H1 (cell line): ENCODE measurements at regions of chr22 and their contacts with region 1.

Region 1: GRCh38 chr22:30423982-30424963 is 1.3 kb upstream of the MTFP1 start:
- DNase-seq: peak; percentile 94 to 99
- H3K4me3 ChIP-seq: peak overlapping the region; percentile 70 to 88 (median 74)
- H3K27ac ChIP-seq: no peak overlapping the region
- H3K4me1 ChIP-seq: peaks cover 3 to 21% (median 13%) of the 10 kb centered on the region in 4 experiments
- H3K27me3 ChIP-seq: no peaks in the 10 kb centered on the region
- CTCF ChIP-seq: peak in 1 of 3 experiments; percentile 20; a peak in 2 of 4 replicates
- EP300 ChIP-seq: peak in 1 of 2 experiments; percentile 76; a peak in 1 of 3 replicates
- POLR2A ChIP-seq: peak; percentile 46 to 81
- RAD21 ChIP-seq: no peak

Region 2: DNA sequence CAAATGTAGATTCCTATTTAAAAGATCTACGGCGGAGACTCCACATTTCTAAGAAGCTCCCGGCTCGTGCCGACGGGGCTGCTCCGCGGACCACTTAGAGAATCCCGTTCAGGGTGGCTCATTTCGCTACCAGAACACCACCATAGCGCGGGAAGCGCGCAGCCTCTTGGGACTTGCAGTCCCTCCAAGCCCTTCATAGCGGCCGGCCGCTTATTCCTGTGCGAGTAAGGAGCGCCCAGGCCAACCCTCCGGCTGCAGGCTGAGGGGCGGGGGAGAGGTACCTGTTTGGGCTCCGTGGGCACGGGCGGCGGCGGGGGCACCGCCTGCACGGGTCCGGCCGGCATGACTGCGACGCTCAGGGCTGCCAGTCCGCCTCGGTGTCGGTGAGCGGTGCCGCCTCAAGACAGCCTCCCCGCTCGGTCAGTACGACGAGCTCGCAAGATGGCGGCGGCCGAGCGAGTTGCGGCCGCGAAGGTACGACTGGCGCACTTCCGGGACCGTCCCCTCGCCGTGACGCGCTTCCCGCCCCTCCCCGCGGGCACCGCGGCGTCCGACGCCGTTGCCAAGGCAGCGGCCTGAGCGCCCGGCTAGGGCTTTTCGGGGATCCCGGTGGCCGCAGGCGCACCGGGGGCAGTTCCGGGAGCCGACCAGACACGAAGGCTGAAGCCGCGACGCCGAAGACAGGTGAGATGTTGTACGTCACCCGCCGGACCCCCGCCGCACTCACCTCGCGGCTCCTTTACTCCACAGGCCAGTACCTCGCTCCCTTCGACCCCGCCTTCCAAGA is 67.6 kb before region 1 on chr22 and contains the starts of genes CCDC157 and SF3A1:
- CTCF ChIA-PET with region 1: interaction called, 4 read pairs
- POLR2A ChIA-PET with region 1: interaction called, 20 read pairs
- DNase-seq: peak; percentile 72 to 91
- H3K4me3 ChIP-seq: peak within 1 kb of the TSS; percentile 78 to 93 (median 91)
- H3K27ac ChIP-seq: peak within 1 kb of the TSS; percentile 93
- H3K4me1 ChIP-seq: peaks cover 2 to 11% (median 4%) of the 10 kb centered on the region in 4 experiments; a peak in 6 of 7 replicates
- H3K27me3 ChIP-seq: no peaks in the 10 kb centered on the region
- CTCF ChIP-seq: no peak
- EP300 ChIP-seq: peak in 1 of 2 experiments; percentile 5; a peak in 1 of 3 replicates
- POLR2A ChIP-seq: peak; percentile 87 to 98
- RAD21 ChIP-seq: no peak
- total RNA-seq, gene CCDC157: 4.1 and 4.8 TPM in 2 replicates
- total RNA-seq, gene SF3A1: 275 and 285 TPM in 2 replicates

Region 3: DNA sequence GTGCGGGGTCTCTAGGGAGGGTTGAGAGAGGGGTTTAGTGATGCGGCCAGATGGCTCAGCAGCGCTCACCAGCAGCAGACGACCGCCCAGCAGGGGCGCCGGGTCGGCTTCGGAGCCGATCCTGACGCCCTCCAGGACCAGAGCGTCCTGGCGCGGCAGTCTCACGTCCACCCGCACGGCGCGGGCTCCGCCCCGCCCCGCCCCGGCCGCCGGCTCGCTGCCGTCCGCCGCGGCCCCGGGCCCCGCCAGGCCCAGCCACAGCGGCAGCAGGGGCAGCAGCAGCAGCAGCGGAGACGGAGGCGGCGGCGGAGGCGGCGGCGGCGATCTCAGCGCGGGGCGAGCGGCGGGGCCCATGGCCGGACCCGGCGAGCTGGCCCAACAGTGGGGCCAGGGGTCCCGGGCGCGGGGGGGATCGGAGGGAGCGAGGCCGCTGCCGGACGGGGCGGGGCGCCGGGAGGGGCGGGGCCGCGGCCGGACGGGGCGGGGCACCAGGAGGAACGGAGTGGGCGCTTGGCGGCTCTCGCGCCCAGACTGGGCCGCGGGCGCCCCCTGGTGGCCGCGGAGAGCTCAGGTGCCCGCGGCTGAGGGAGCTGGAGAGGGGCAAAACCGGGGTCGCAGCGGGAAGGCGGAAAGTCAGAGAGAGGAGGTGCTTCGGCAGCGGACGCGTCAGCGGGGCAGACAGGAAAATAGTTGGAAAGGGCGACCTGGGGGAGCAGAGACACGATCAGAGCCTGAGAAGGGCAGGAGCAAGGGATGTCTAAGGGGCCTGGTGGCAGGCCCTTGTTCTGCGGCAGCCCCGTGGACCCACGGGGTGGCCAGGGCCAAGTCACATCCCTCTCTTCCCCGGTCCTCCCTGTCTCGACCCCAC is 37.1 kb before region 1 on chr22 and contains the start of gene RNF215:
- CTCF ChIA-PET with region 1: interaction called, 164 read pairs
- POLR2A ChIA-PET with region 1: interaction called, 8 read pairs
- DNase-seq: peak; percentile 77 to 95
- H3K4me3 ChIP-seq: peak within 1 kb of the TSS; percentile 42 to 66 (median 54)
- H3K27ac ChIP-seq: no peak within 1 kb of the TSS
- H3K4me1 ChIP-seq: peaks cover 0 to 7% (median 2%) of the 10 kb centered on the region in 4 experiments; a peak in 4 of 7 replicates
- H3K27me3 ChIP-seq: no peaks in the 10 kb centered on the region
- CTCF ChIP-seq: peak; percentile 79 to 92 (median 79)
- EP300 ChIP-seq: no peak
- POLR2A ChIP-seq: no peak
- RAD21 ChIP-seq: peak; percentile 78 to 86
- total RNA-seq, gene RNF215: 15.3 and 19.0 TPM in 2 replicates

Region 4: DNA sequence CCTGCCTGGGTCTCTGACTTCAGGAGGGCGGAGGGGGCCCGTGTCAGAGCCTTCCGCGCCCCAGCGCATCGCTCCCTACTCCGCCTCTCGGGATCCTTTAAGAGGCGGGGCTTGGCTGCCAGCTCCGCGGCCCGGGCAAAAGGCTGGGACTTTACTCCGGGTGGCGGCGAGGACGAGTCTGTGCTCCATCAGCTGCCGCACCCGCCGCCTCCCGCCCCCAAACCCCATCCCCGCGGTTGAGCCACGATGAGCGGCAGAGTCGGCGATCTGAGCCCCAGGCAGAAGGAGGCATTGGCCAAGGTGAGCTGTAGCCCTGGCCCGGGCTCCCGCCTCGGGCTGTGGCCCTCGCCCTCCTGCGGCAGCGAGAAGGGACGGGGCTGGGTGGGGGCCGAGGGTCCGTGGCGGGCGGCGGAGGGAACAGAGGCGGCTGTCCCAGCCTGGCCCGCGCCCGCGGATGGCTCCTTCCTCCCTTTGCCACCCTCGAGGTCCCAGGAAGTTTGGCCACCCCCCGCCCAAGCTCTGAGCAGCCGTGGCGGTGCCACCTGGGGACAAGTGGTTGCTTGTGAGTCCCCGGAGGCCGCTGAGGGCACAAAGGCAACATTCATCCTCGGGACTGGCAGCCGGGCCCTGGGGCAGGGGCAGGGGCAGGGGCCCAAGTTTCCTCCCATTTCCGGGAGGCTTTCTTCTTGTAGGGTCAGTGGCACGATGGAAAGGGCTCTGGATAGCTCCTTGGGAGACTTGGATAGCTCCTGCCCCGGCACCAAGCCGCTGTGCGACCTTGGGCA is 27.2 kb before region 1 on chr22 and contains the start of gene SEC14L2:
- CTCF ChIA-PET with region 1: interaction called, 164 read pairs
- POLR2A ChIA-PET with region 1: interaction called, 39 read pairs
- DNase-seq: peak in 1 of 2 experiments; percentile 83
- H3K4me3 ChIP-seq: peak within 1 kb of the TSS; percentile 48 to 74 (median 64)
- H3K27ac ChIP-seq: no peak within 1 kb of the TSS
- H3K4me1 ChIP-seq: peaks cover 6 to 20% (median 10%) of the 10 kb centered on the region in 4 experiments
- H3K27me3 ChIP-seq: peaks cover 2 to 16% (median 8%) of the 10 kb centered on the region in 4 experiments; a peak in 6 of 7 replicates
- CTCF ChIP-seq: no peak
- EP300 ChIP-seq: no peak
- POLR2A ChIP-seq: 0 out of 3 replicates have a peak, but pooled peaks of 1 of the 2 experiments have one; percentile 43
- RAD21 ChIP-seq: no peak
- total RNA-seq, gene SEC14L2: 2.8 and 4.3 TPM in 2 replicates

Region 5: DNA sequence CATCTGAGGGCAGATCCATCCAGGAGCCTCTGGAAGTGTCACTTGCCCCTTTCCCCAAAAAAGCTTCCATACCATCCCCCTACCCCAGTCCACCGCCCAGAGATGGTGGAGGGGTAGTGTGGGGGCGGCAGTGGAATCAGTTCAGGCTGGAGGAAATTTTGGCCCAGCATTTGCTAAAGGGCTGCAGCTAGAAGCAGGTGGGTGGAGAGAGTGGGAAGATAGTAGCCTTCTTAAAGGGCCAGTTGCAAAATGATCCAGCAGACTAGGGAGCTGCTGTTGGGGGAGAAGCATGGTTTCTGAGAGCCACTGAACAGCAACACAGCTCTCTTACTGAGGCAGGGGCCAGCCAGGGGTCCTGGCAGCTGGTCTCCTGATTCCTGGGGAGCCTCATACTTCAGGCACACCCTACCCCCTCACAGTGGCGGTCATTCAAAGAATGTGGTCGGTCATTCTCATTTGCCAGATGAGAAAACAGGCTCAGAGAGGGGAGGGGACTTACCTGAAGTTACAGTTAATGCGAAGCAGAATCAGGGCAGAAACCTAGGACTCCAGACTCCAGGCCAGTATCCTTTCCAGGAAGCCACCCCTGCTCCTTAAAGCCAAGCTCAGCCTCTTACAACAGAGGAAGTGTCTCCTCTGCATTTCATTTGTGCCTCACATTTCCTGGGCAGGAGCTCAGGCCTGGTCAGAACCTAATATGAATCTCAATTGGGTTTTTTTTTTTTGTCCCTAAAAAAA is 22.1 kb before region 1 on chr22:
- CTCF ChIA-PET with region 1: interaction called, 164 read pairs
- POLR2A ChIA-PET with region 1: interaction called, 39 read pairs
- DNase-seq: no peak
- H3K4me3 ChIP-seq: 0 out of 8 replicates have a peak overlapping the region, but pooled peaks of 1 of the 4 experiments have one; percentile 5
- H3K27ac ChIP-seq: no peak overlapping the region; the same call in 1 of the 2 replicates
- H3K4me1 ChIP-seq: peaks cover 4 to 12% (median 10%) of the 10 kb centered on the region in 4 experiments
- H3K27me3 ChIP-seq: peaks cover 0 to 16% (median 7%) of the 10 kb centered on the region in 4 experiments; a peak in 4 of 7 replicates
- CTCF ChIP-seq: no peak
- EP300 ChIP-seq: no peak
- POLR2A ChIP-seq: no peak
- RAD21 ChIP-seq: no peak

Region 6: DNA sequence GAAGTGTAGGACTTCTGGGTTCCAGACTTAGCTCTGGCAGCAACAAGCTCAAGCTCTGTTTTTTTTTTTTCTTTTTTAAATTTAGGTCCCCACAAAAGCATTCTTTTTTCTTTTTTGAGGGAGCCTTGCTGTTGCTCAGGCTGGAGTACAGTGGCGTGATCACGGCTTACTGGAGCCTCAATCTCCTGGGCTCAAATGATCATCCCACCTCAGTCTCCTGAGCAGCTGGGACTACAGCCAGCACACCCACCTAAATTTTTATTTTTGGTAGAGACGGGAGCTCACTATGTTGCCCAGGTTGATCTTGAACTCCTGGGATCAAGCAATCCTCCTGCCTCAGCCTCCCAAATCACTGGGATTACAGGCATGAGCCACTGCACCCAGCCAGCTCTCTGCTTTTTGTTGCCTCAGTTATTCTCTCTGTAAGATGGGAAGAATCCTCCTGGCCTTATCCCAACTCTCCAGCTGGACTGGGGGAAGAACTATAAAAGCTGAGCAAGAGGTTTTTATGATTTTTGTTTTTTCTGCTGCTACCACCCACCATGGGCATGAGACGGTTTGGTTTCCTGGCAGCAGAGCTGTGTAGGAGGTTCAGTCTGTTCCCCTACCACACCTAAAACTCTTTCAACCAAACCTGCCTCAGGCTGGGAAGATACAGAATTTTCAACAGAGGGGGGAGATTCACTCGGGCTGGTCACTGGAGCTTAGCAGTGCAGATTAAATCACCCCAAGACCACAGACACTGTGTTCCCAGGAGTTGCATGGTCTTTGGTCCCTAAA is 10.3 kb before region 1 on chr22:
- CTCF ChIA-PET with region 1: interaction called, 48 read pairs
- POLR2A ChIA-PET with region 1: interaction called, 22 read pairs
- DNase-seq: no peak
- H3K4me3 ChIP-seq: no peak overlapping the region
- H3K27ac ChIP-seq: no peak overlapping the region
- H3K4me1 ChIP-seq: no peaks in the 10 kb centered on the region
- H3K27me3 ChIP-seq: no peaks in the 10 kb centered on the region
- CTCF ChIP-seq: no peak
- EP300 ChIP-seq: no peak
- POLR2A ChIP-seq: no peak
- RAD21 ChIP-seq: no peak

Region 7: GRCh38 chr22:30444632-30445437 is 20.6 kb after region 1 on chr22:
- CTCF ChIA-PET with region 1: interaction called, 25 read pairs
- POLR2A ChIA-PET with region 1: interaction called, 27 read pairs
- DNase-seq: peak; percentile 59 to 91
- H3K4me3 ChIP-seq: peak overlapping the region in 2 of 4 experiments; percentile 16 to 42; a peak in 4 of 8 replicates
- H3K27ac ChIP-seq: no peak overlapping the region
- H3K4me1 ChIP-seq: peaks cover 0 to 5% (median 5%) of the 10 kb centered on the region in 4 experiments; a peak in 6 of 7 replicates
- H3K27me3 ChIP-seq: no peaks in the 10 kb centered on the region
- CTCF ChIP-seq: peak; percentile 79 to 85 (median 82)
- EP300 ChIP-seq: no peak
- POLR2A ChIP-seq: no peak; a peak in 1 of 3 replicates
- RAD21 ChIP-seq: peak; percentile 83 to 87

Region 8: DNA sequence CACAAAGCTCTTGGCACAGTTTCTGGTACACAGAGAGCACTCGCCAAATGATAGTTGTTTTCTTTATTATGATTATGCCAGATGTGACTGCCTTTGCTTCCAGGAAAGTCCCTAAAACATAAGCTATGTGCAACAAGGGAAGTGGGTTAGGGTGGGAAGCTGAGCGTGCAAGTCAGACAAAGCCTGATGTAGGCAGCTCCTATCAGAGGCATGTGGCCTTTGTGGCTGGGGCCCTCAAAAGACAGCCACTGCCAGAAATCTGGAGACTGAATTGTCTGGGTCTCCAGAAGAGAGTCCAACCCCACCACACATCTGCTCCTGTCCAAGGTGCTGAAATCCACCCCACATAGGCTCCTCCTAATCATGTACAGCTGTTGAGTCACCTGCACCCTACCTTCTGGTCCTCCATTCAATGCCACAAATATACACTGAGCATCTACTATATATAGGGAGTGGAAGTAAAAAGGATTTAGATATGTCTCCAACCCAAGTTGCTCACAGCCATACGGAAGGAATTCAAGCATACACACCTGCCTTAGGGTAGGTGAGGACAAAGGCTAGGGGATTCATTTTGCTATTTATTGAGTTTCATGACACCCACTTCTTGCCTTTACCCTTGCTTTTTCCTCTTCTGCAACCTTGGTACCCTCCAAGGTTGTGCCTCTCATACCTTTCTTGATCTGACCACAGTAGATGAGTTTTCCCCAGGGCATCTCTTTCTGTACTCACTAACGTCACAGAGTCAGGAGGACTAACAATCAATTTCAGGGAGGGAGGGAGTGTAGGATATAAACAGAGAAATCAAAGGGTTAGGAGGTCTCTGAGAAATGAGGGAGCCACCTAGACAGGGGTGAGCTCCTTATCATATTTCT is 35.1 kb after region 1 on chr22:
- CTCF ChIA-PET with region 1: no interaction called
- POLR2A ChIA-PET with region 1: no interaction called
- DNase-seq: peak in 1 of 2 experiments; percentile 52
- H3K4me3 ChIP-seq: no peak overlapping the region
- H3K27ac ChIP-seq: no peak overlapping the region
- H3K4me1 ChIP-seq: no peaks in the 10 kb centered on the region
- H3K27me3 ChIP-seq: no peaks in the 10 kb centered on the region
- CTCF ChIP-seq: no peak
- EP300 ChIP-seq: no peak
- POLR2A ChIP-seq: no peak
- RAD21 ChIP-seq: no peak